ENCODE measurements at regions of chr17 and their contacts with region 1.

Region 1: GRCh38 chr17:50200457-50201275 is 765 bp downstream of the COL1A1 start:
- DNase-seq: no peak
- H3K4me3 ChIP-seq: peak overlapping the region; percentile 96
- H3K27ac ChIP-seq: peak overlapping the region; percentile 99
- H3K27me3 ChIP-seq: no peaks in the 10 kb centered on the region
- CTCF ChIP-seq: peak; percentile 85

Region 2: DNA sequence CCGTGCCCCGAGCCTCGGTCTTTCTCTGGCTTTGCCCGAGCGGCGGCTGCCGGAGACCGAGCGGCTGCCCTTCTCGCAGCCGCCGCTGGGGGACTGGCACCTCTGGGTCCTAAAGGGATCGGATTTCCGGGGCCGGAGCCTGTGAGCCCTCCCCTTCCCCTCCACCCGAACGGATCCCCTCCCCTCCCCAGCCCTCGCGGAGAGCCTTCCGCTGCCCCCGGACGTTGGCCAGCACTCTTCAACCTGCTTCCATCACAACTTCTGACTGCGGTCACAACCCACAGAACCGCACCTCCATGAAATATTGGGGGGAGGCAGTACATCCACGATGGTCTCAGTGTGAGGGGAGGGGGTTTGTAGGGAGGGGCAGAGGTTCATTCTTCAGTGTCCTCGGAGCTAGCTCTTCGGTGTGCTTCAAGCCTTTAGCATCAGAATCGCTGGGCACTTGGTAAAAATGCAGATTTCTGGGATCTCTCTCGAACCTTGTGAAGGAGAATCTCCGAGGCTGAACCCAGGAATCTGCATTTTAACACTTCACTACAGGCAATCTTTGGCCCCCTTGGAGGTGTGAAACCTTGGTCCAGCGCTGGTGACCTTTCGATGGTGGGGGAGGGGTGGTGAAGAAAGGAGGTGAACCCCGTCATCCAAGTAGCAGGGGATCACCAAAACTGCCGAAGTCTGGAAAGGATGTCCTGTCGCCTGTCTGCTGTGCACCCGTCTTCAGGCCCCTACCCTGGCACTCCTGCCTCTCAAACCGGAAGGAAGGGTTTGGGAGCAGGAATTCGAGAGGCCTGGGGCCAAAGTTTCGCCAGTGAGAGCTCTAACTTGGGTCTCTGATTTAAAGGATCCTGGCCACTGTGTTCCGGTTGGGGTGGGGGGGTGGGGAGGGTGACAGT is 49.4 kb before region 1 on chr17:
- CTCF ChIA-PET with region 1: interaction called, 3 read pairs
- POLR2A ChIA-PET with region 1: interaction called, 15 read pairs
- DNase-seq: peak; percentile 69
- H3K4me3 ChIP-seq: peak overlapping the region; percentile 79
- H3K27ac ChIP-seq: peak overlapping the region; percentile 67
- H3K27me3 ChIP-seq: no peaks in the 10 kb centered on the region
- CTCF ChIP-seq: peak; percentile 69

Region 3: GRCh38 chr17:50177983-50178834 is 22.5 kb before region 1 on chr17:
- CTCF ChIA-PET with region 1: interaction called, 5 read pairs
- POLR2A ChIA-PET with region 1: interaction called, 97 read pairs
- DNase-seq: peak; percentile 92
- H3K4me3 ChIP-seq: 0 out of 2 replicates have a peak overlapping the region, but pooled peaks have one; percentile 4
- H3K27ac ChIP-seq: peak overlapping the region; percentile 98
- H3K27me3 ChIP-seq: no peaks in the 10 kb centered on the region
- CTCF ChIP-seq: peak; percentile 59

Region 4: DNA sequence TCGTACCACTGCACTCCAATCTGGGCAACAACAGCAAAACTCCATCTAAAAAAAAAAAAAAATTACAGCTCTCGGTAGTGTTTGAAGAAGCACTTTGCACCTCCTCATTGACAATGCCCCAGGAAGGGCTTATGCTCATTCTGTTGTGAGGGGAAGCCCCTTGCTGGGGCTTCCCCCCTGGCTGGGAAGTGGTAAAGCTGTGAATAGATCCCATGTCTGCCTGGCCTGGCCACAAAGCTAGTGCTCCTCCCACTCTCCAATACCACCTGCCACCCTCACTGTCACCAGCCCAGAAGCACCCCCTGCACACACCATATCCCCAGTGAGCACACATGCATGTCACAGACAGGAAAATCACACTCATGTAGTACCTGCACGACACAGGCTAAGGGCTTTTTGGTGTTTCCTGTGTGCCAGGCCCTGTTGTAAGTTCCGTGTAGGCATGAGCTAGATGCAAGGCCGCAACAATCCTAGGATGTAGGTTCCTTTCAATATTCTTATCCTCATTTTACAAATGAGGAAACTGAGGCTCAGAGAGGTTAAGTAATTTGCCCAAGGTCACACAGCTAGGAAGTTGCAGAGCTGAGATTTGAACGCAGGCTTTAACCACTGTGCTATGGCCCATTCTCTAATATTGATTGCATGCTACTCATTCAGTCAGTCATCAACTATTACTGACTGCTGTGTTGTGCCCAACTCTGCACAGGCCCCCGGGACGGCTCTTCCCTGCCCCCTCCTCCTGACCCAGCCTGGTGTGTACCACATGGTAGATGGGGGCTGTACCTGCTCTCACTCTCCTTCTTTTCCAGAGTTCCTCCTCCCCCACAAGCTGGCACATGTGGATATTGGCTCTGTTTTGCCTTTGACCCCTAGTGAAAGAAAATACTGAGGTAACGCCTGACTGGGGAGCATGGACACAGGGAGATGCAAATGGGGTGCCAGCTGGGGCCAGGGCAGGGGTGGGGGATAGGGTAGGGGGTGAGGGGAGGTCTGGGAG is 12.7 kb after region 1 on chr17:
- CTCF ChIA-PET with region 1: interaction called, 6 read pairs
- POLR2A ChIA-PET with region 1: interaction called, 726 read pairs
- DNase-seq: no peak
- H3K4me3 ChIP-seq: no peak overlapping the region
- H3K27ac ChIP-seq: no peak overlapping the region
- H3K27me3 ChIP-seq: no peaks in the 10 kb centered on the region
- CTCF ChIP-seq: no peak

Region 5: DNA sequence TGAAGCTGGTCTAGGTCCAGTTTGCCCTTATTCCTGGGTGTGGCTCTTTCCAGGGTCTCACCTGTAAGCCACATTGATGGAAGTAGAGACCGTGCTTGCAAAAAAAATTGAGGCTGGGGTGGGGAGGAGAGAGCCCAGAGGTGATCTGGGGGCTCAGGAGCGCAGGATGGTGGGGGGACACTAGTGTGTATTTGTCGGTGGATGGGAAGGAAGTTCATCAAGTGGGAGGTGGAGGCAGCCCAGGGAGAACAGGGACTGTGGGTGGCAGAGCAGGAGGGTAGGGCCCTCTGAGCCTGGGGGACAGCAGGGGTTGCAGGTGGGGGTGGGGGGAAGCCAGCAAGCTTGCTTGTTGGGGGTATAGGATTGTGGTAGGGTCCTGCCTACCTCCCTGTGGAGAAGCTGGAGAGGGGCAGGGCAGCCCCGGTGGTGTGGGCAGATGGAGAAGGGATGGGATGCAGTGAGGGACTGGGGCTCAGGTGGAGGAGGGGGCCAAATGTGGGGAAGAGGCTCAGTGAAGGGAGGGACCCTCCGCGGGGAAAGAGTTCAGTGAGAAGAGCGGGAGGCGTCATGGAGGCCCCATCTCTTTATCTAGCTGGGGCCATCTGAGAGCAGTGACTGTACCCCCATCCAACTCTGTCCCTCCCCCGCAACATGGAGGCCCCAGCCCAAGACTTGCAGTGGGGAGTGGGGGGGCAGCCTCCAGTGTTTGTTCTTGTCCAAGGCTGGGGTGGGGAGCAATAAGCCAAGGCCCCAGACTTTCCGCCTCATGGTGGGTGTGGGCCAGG is 56.4 kb after region 1 on chr17:
- CTCF ChIA-PET with region 1: no interaction called
- POLR2A ChIA-PET with region 1: interaction called, 654 read pairs
- DNase-seq: no peak
- H3K4me3 ChIP-seq: no peak overlapping the region
- H3K27ac ChIP-seq: no peak overlapping the region
- H3K27me3 ChIP-seq: no peaks in the 10 kb centered on the region
- CTCF ChIP-seq: no peak

Region 6: GRCh38 chr17:50289991-50290702 is 89.5 kb after region 1 on chr17:
- CTCF ChIA-PET with region 1: interaction called, 11 read pairs
- POLR2A ChIA-PET with region 1: interaction called, 63 read pairs
- DNase-seq: peak; percentile 96
- H3K4me3 ChIP-seq: peak overlapping the region; percentile 55
- H3K27ac ChIP-seq: peak overlapping the region; percentile 97
- H3K27me3 ChIP-seq: no peaks in the 10 kb centered on the region
- CTCF ChIP-seq: no peak

Region 7: DNA sequence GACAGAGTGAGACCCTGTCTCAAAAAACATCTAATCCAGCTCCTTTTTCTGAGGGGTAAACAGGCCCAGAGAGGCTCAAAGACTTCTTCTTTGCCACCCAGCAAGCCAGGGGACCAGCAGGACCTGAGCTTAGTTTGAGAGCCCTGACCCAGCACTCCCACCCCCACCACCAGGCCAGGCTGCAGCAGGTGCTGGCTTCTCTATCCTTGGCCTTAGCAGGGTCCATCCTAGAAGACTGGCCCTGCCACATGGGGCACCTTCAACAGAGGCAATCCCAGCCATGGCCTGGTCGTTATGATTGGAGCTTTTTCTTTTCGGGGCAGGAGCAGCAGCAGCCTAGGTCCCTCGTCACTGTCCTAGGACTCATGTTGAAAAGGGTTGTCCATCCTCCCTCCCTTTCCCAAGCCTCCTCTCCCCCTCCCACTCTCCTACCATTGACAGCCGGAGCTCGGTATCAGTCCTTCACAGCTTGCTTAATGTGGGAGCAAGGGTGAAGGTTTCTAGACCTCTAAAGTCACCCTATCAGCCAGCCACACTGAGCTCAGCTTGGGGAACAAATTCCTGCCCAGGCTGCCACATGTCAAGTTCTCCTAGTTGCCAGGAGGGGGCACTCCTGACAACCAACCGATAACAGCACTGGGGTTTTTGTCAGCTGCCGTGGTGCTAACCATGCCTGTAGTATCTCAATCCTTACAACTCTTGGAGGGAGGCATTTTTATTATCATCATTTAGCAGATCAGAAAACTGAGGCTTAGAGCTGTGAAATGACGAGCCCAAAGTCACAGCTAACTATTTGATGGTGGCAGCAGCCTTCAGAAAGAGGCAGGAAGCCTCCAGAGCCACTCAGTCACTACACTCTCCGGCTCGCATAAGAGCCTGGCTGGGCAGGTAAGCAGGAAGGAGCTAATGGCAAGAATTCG is 161.2 kb after region 1 on chr17:
- CTCF ChIA-PET with region 1: interaction called, 3 read pairs
- POLR2A ChIA-PET with region 1: interaction called, 10 read pairs
- DNase-seq: peak; percentile 49
- H3K4me3 ChIP-seq: no peak overlapping the region
- H3K27ac ChIP-seq: no peak overlapping the region
- H3K27me3 ChIP-seq: no peaks in the 10 kb centered on the region
- CTCF ChIP-seq: peak; percentile 80

Region 8: GRCh38 chr17:50719144-50719923 is 518.7 kb after region 1 on chr17 and contains the start of gene LUC7L3:
- CTCF ChIA-PET with region 1: no interaction called
- POLR2A ChIA-PET with region 1: no interaction called
- DNase-seq: peak; percentile 78
- H3K4me3 ChIP-seq: peak within 1 kb of the TSS; percentile 93
- H3K27ac ChIP-seq: peak within 1 kb of the TSS; percentile 96
- H3K27me3 ChIP-seq: no peaks in the 10 kb centered on the region
- CTCF ChIP-seq: no peak
- polyA plus RNA-seq, gene LUC7L3: 70.6 and 120 TPM in 2 replicates